ENCODE measurements at regions of chr12 and their contacts with region 1.

Region 1: DNA sequence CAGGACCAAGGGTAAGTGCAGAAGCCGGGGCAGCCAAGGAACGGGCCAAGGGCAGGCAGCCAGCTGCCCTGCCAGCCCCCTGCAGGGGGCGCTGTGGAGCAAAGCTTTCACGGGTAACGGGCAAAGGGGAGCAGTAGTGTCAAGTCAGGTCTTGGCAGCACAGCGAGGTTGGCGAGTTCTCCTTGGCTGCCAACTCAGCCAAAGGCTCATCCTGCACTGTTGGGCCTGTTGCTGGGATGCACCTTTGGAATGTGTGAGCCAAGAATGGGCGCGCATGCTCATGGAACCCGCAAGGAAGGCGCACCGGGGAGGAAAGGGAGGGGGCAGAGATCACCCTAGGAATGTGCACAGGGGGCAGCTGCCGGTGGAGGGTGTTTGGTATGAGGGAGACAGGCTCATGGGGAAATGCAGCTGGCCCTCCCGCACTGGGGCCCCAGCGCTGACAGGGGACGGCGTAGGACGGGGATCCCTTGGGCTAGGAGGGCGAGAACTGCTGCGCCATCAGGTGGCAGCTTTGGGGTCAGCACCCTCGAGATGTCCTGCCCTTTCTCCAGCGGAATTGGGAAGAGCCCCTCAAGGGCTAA is 138.0 kb downstream of the ASCL4 start:
- DNase-seq: peak; percentile 43 to 64
- ATAC-seq: peak; percentile 55 to 82 (median 65)
- H3K4me3 ChIP-seq: peak overlapping the region; percentile 21
- H3K4me3 Mint-ChIP-seq: peak overlapping the region; percentile 37
- H3K27ac ChIP-seq: no peak overlapping the region
- H3K27ac Mint-ChIP-seq: no peak overlapping the region
- H3K4me1 ChIP-seq: peaks cover 6% of the 10 kb centered on the region
- H3K4me1 Mint-ChIP-seq: peaks cover 0 to 7% of the 10 kb centered on the region in 2 donors
- H3K27me3 ChIP-seq: no peaks in the 10 kb centered on the region
- H3K27me3 Mint-ChIP-seq: peaks cover 27 to 44% of the 10 kb centered on the region in 2 donors
- CTCF ChIP-seq: peak; percentile 57

Region 2: DNA sequence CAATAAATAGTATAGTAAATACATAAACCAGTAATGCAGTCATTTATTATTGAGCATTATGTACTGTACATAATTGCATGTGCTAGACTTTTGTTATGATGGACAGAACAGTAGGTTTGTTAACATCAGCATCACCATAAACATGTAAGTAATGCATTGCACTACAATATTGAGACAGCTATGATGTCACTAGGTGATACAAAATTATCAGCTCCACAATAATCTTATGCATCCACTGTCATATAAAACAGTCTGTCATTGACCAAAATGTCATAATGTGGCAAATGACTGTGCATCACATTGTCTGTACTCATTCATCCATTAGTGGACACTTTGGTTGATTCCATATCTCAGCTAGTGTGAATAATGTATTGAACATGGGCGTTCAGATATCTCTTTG is 44.4 kb before region 1 on chr12:
- intact Hi-C with region 1: loop called (anchors 1 kb)
- DNase-seq: no peak
- ATAC-seq: no peak
- H3K4me3 ChIP-seq: no peak overlapping the region
- H3K4me3 Mint-ChIP-seq: no peak overlapping the region
- H3K27ac ChIP-seq: no peak overlapping the region
- H3K27ac Mint-ChIP-seq: no peak overlapping the region
- H3K4me1 ChIP-seq: no peaks in the 10 kb centered on the region
- H3K4me1 Mint-ChIP-seq: peaks cover 0 to 5% of the 10 kb centered on the region in 2 donors
- H3K27me3 ChIP-seq: peaks cover 8% of the 10 kb centered on the region
- H3K27me3 Mint-ChIP-seq: peaks cover 37 to 54% of the 10 kb centered on the region in 2 donors
- CTCF ChIP-seq: no peak

Region 3: GRCh38 chr12:107983756-107984472 is 71.4 kb after region 1 on chr12:
- intact Hi-C with region 1: no loop called
- DNase-seq: no peak
- ATAC-seq: no peak
- H3K4me3 ChIP-seq: no peak overlapping the region
- H3K4me3 Mint-ChIP-seq: no peak overlapping the region
- H3K27ac ChIP-seq: no peak overlapping the region
- H3K27ac Mint-ChIP-seq: no peak overlapping the region
- H3K4me1 ChIP-seq: no peaks in the 10 kb centered on the region
- H3K4me1 Mint-ChIP-seq: no peaks in the 10 kb centered on the region
- H3K27me3 ChIP-seq: no peaks in the 10 kb centered on the region
- H3K27me3 Mint-ChIP-seq: peaks cover 24 to 27% of the 10 kb centered on the region in 2 donors
- CTCF ChIP-seq: no peak

Measured in natural killer cell (primary cell).